ENCODE measurements at regions of chr6 and their contacts with region 1.

Region 1: GRCh38 chr6:139508023-139508422 is 133.6 kb upstream of the CITED2 start:
- DNase-seq: peak; percentile 49
- ATAC-seq: no peak
- H3K4me3 ChIP-seq: no peak overlapping the region
- H3K27ac ChIP-seq: no peak overlapping the region
- H3K4me1 ChIP-seq: no peaks in the 10 kb centered on the region
- H3K27me3 ChIP-seq: no peaks in the 10 kb centered on the region
- CTCF ChIP-seq: no peak
- POLR2A ChIP-seq: no peak
- RAD21 ChIP-seq: no peak

Region 2: GRCh38 chr6:139422105-139423036 is 85.7 kb before region 1 on chr6:
- CTCF ChIA-PET with region 1: no interaction called
- POLR2A ChIA-PET with region 1: interaction called, 16 read pairs
- dilution Hi-C with region 1: no loop called
- in situ Hi-C with region 1: no loop called
- intact Hi-C with region 1: no loop called
- DNase-seq: no peak
- ATAC-seq: no peak
- H3K4me3 ChIP-seq: no peak overlapping the region
- H3K27ac ChIP-seq: no peak overlapping the region
- H3K4me1 ChIP-seq: no peaks in the 10 kb centered on the region
- H3K27me3 ChIP-seq: no peaks in the 10 kb centered on the region
- CTCF ChIP-seq: no peak
- POLR2A ChIP-seq: no peak
- RAD21 ChIP-seq: no peak

Region 3: DNA sequence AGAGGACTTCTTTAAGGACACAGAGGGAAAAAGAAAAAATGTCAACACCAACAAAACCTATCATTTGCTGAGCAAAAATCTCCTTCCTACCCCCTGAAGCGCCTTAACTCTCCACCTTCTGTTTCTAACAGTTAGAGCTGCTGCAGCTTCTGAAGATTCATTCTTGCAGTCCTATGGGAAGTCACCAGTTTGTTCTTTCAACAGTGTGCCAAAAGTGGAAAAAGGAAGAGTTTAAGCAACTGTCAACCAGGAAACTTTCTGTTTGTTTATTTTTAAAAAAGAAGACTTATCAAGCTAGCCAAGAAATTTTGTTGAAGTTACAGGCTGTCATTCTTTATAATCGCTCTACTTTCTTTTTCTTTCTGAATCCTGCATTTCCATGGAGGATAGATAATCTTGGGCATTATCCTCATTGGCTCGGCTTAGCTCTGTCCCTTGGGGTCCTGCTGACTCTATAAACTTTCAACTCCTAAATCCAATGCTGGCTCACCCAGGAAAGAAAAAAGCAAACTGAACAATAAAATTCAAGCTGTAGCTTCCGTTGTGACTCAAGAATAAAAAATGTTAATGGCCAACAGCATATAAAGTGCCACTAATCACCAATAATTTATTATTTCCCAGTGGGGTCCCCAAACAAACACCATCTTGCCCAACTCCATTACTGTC is 39.2 kb after region 1 on chr6:
- CTCF ChIA-PET with region 1: no interaction called
- POLR2A ChIA-PET with region 1: no interaction called
- dilution Hi-C with region 1: no loop called
- in situ Hi-C with region 1: no loop called
- intact Hi-C with region 1: no loop called
- DNase-seq: no peak
- ATAC-seq: peak; percentile 52; the same call in 1 of the 2 replicates
- H3K4me3 ChIP-seq: no peak overlapping the region
- H3K27ac ChIP-seq: peak overlapping the region; percentile 32; the same call in 1 of the 2 replicates
- H3K4me1 ChIP-seq: peaks cover 16% of the 10 kb centered on the region
- H3K27me3 ChIP-seq: no peaks in the 10 kb centered on the region
- CTCF ChIP-seq: no peak
- POLR2A ChIP-seq: no peak
- RAD21 ChIP-seq: no peak

Measured in IMR-90 (cell line).